Mucosa of descending colon (tissue), 3 donors: ENCODE measurements at regions of chr7 and their contacts with region 1.

Region 1: GRCh38 chr7:106461993-106462859 is 177.4 kb upstream of the NAMPT start:
- DNase-seq: peak in 1 of 3 donors; percentile 51
- ATAC-seq: peak; percentile 45
- H3K4me3 ChIP-seq: no peak overlapping the region
- H3K4me1 ChIP-seq: no peaks in the 10 kb centered on the region
- CTCF ChIP-seq: no peak

Region 2: DNA sequence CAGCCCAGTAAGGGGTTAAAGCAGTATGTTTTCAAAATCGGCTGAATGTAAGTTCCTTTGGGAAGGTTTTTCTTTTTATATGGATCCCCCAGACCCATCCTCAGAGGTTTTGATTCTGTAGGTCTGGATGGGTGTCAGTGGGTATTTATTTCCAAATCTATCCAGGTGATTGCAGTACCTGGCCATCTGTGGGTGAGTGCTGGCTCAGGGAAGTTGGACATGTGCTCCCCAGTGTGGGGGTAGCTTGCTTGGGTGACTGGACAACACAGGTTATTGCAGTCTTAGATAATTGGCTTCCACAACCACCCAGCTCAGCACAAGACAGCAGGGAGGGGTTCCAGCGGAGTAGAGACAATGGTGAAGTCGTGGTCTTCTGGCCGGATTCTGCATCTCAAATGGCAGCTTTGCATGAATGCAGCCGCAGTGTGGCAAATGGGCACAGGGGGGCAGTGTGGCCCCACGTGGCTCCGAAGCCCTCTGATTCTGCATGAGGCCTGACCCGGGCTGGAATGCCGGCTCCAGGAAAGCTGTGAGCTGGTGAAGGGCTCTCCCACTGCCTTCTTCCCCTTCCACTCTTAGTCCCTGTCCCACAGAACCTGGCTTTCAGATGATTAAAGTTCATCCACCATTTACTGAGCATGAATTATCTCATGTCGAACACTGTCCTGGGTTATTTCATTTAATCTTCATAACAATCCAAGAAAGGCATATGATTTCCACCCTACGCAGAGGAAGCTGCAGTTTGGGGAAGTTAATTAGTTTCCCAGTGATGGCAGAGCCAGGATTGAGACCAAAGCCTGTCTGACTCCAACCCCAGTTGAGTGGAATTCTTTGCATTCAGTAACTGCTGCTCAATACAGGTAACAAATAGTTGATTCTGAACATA is 285.6 kb before region 1 on chr7:
- intact Hi-C with region 1: loop called (anchors 2 to 5 kb)
- DNase-seq: peak; percentile 72 to 92 (median 87)
- ATAC-seq: peak; percentile 93
- H3K4me3 ChIP-seq: no peak overlapping the region
- H3K4me1 ChIP-seq: no peaks in the 10 kb centered on the region
- CTCF ChIP-seq: peak; percentile 94

Region 3: DNA sequence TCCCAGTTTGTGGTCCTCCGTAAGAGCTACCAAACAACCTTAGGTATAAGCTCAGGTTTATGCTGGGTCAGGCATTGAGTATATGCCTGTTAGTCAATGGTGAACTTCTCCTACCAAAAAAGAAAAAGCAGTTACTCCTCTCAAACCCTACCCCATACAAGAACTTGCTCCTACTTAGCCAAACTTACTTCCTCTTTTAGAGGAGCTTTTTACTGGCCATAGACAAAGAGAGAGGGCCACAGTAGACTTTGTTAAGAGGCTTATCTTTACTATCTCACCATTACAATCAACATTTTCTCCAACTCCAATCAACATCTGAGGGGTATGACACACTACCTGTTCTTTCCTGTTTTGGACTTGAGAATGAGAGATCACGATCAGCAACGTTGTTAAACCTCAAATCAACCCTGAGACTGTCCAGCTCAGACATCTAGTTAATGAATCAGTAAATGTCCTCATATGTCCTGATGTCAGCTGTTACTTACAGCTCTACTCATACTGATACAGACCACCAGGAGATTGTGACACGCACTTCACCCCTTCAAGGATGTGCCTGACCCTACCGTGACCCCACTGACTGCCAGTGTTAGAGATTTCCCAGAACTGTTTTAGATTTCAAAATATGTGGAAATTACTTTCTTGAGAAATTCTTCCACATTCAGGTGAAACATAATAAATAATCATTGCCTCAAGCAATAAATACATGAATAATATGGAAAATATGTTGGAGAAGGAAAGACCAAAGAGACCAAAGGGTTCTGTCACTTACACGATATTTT is 217.1 kb after region 1 on chr7:
- intact Hi-C with region 1: no loop called
- DNase-seq: no peak
- ATAC-seq: peak; percentile 29
- H3K4me3 ChIP-seq: no peak overlapping the region
- H3K4me1 ChIP-seq: no peaks in the 10 kb centered on the region
- CTCF ChIP-seq: no peak